ENCODE measurements at regions of chr5 and their contacts with region 1.

Region 1: DNA sequence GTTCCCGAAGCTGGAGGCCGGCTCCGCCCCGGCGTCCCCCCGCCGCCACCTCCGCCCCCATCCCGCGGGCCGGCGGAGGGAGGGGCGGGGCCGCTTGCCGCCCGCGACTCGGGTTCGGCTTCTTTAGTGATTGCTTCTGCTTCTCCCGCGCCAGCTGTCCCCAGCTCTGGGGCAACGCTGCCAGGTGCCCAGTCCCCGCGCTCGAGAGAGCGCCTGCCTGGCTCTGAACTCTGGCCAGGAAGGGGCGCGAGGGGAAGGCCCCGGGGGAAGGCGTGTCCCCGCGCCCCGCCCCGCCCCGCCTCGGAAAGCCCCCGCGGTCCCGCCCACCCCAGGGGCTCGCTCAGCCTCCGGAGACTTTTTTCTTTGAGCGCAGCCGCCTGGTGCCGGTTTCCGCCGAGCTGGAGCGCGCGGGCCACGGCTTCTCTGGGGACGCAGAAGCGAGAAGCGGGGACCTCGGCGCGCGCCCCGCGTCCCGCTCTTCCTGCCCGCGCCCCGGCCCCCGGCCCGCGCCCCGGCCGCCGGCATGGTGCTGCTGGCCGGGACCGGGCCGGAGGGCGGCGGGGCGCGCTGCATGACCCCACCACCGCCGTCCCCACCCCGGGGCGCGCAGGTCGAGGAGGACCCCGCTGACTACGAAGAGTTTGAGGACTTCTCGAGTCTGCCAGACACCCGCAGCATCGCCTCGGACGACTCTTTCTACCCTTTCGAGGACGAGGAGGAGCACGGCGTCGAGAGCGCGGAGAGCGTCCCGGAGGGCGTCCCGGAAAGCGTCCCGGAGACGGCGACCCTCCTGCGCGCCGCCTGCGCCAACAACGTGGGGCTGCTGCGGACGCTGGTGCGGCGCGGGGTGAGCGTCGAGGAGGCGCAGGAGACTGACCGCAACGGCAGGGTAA is at the start of gene ANKRD33B:
- H3K4me3 Mint-ChIP-seq: peak within 1 kb of the TSS; percentile 76
- H3K27ac Mint-ChIP-seq: peak within 1 kb of the TSS; percentile 45
- H3K4me1 Mint-ChIP-seq: peaks cover 35% of the 10 kb centered on the region
- H3K27me3 Mint-ChIP-seq: peaks cover 69% of the 10 kb centered on the region

Region 2: DNA sequence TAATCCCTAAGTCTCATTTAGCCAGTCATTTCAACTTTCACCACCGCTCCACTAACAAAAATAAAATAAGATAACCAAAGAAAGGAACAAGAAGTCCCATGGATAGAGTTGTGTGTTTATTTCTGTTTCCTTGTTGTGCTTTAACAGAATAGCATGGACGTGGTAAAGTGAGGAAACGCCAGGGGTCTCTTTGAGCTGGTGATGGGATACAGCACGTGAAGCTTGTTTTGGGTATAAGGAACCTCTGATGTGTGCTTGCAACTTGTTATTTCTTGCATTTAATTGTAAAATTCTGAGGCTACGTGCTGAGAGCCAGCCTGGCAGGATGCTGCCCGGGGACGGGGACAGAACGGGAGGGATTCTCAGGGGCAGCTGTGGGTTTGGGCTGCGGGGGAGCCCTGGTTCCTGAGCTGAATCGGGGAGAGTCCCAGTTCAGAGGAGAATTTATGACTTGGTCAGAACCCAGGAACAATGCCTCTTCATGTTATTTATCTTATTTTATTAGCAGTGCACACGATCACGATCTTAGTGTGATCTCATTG is 63.0 kb after region 1 on chr5:
- intact Hi-C with region 1: loop called (anchors 2 kb)
- H3K4me3 Mint-ChIP-seq: peak overlapping the region; percentile 59
- H3K27ac Mint-ChIP-seq: peak overlapping the region; percentile 14
- H3K4me1 Mint-ChIP-seq: peaks cover 56% of the 10 kb centered on the region
- H3K27me3 Mint-ChIP-seq: peaks cover 43% of the 10 kb centered on the region

Measured in dendritic cell treated with granulocyte-macrophage colony-stimulating factor and Interleukin-4, amounts not matched to agents 40 ng/mL and 50 ng/mL, for 4 days (primary cell).